Activated naive CD4-positive, alpha-beta T cell treated with anti-CD3 and anti-CD28 coated beads, Interleukin-2, amount 10 ng/mL, durations not matched to agents 7 days and 5 days (primary cell): ENCODE measurements at regions of chr11 and their contacts with region 1.

Region 1: DNA sequence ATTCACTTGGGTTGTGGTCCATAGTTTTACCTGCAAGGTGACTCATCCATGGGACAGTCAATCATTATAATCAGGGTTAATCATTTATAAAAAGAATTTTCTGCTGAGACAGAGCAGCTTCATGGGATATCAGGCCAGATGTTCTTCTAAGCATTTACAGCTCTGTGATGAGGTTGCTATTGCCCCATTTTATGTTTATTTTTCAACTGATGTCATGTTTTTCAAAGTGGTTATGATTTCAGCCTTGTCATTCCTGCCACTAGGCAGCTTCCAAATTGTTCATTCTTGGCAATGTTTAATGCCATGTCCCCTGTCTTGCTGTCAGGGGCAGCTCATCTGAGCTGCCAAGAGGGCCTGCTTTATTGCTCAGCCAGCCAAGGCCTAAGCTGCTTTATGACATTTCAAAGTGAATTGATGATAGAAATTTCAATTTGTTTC is 35.9 kb upstream of the ZBED5 start:
- DNase-seq: no peak
- H3K4me3 Mint-ChIP-seq: no peak overlapping the region
- H3K27ac Mint-ChIP-seq: no peak overlapping the region
- H3K4me1 Mint-ChIP-seq: no peaks in the 10 kb centered on the region
- H3K27me3 Mint-ChIP-seq: peaks cover 16% of the 10 kb centered on the region

Region 2: GRCh38 chr11:10878408-10879214 is 15.1 kb before region 1 on chr11:
- CTCF ChIA-PET with region 1: interaction called, 11 read pairs
- DNase-seq: no peak
- H3K4me3 Mint-ChIP-seq: no peak overlapping the region
- H3K27ac Mint-ChIP-seq: peak overlapping the region; percentile 56
- H3K4me1 Mint-ChIP-seq: peaks cover 11% of the 10 kb centered on the region
- H3K27me3 Mint-ChIP-seq: no peaks in the 10 kb centered on the region

Region 3: DNA sequence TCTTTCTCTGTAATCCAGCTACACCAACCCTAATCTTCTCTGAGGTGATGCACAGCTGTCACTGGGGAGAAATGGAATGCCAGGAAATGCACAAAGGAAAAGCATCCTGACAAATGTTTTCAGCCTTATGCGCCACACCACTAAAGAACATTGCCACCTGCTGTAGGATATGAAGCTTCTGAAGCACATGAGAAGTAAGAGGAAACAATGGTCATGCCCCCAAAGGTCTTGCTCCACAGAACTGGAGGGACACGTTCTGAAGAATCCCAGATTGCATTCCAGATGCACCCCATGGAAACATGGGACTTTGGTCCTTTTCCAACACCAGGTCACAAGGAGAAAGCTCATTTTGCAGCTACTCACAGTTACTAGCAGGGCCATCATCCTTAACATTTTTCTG is 12.8 kb after region 1 on chr11:
- CTCF ChIA-PET with region 1: no interaction called
- DNase-seq: no peak
- H3K4me3 Mint-ChIP-seq: no peak overlapping the region
- H3K27ac Mint-ChIP-seq: no peak overlapping the region
- H3K4me1 Mint-ChIP-seq: no peaks in the 10 kb centered on the region
- H3K27me3 Mint-ChIP-seq: peaks cover 10% of the 10 kb centered on the region

Region 4: DNA sequence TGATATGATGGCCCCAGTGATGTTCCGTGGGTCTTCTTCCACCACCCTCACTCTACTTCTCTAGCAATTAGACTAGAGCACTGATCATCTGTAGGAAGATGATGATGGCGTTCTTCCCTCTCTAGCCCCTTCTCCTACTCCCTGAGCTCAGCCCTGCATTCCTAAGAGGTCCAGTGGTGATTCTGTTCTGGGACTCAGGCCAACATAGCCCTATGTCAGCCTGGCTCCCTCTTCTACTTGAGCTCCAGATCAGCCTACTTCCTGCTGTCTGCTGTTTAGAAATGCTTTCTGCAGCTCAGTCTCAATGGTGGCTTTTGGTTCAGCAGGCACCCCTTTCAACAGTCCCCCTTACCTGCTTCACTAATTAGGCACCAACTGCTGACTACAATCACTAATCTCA is 50.2 kb after region 1 on chr11:
- CTCF ChIA-PET with region 1: no interaction called
- DNase-seq: no peak
- H3K4me3 Mint-ChIP-seq: no peak overlapping the region
- H3K27ac Mint-ChIP-seq: no peak overlapping the region
- H3K4me1 Mint-ChIP-seq: no peaks in the 10 kb centered on the region
- H3K27me3 Mint-ChIP-seq: peaks cover 4% of the 10 kb centered on the region

Region 5: GRCh38 chr11:11010624-11011127 is 116.9 kb after region 1 on chr11:
- CTCF ChIA-PET with region 1: no interaction called
- DNase-seq: peak; percentile 34
- H3K4me3 Mint-ChIP-seq: no peak overlapping the region
- H3K27ac Mint-ChIP-seq: no peak overlapping the region
- H3K4me1 Mint-ChIP-seq: no peaks in the 10 kb centered on the region
- H3K27me3 Mint-ChIP-seq: peaks cover 28% of the 10 kb centered on the region